Breast epithelium (tissue), 4 donors: ENCODE measurements at regions of chr22 and their contacts with region 1.

Region 1: DNA sequence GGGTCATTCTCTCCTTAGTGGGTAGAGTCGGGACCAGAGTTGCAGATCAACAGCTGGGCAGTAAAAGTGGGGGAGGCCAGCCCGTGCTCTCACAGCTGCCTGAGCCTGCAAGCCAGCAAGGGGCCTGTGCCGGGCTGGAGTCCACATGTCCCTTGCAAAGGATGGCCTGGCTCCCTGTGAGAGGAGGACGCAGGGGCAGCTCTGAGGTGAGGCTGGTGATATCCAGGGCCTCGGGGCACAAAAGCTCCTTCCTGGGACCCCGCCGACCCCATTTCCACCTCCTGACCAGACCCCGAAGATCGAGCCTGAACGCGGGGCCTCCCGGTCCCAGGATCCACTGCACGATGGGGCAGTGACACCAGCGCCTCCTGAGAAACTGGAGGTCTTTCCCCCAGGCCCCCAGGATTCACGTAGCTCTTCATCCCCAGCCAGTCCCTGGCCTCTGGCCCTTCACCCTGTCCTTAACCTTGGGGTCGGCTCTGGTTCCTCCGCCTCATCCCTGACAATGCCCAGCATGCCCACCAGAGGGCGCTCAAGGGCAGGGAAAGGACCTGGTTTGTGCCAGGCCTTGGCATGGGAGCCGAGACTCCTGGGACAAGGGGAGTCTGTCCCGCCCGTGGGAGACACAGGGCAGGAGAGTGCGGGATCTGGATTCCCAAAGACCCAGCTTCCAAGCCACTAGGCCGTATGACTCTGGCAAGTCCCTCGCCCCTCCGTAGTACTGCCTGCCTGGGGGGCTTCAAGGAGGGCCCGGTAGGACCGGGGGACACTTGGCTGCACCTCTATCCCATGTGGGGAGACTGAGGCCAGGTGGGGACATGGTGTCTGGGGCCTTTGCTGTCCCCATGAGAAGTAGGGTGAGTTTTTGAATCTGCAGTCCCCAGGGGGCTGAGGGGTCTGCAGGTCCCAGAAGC is 17.8 kb upstream of the WNT7B start:
- DNase-seq: peak; percentile 72 to 89
- H3K4me3 ChIP-seq: peak overlapping the region in 1 of 3 donors; percentile 2
- H3K27ac ChIP-seq: peak overlapping the region in 1 of 2 donors; percentile 5
- H3K4me1 ChIP-seq: peaks cover 6 to 9% of the 10 kb centered on the region in 2 donors
- H3K27me3 ChIP-seq: no peaks in the 10 kb centered on the region
- CTCF ChIP-seq: peak; percentile 96 to 99 (median 96)
- POLR2A ChIP-seq: no peak

Region 2: DNA sequence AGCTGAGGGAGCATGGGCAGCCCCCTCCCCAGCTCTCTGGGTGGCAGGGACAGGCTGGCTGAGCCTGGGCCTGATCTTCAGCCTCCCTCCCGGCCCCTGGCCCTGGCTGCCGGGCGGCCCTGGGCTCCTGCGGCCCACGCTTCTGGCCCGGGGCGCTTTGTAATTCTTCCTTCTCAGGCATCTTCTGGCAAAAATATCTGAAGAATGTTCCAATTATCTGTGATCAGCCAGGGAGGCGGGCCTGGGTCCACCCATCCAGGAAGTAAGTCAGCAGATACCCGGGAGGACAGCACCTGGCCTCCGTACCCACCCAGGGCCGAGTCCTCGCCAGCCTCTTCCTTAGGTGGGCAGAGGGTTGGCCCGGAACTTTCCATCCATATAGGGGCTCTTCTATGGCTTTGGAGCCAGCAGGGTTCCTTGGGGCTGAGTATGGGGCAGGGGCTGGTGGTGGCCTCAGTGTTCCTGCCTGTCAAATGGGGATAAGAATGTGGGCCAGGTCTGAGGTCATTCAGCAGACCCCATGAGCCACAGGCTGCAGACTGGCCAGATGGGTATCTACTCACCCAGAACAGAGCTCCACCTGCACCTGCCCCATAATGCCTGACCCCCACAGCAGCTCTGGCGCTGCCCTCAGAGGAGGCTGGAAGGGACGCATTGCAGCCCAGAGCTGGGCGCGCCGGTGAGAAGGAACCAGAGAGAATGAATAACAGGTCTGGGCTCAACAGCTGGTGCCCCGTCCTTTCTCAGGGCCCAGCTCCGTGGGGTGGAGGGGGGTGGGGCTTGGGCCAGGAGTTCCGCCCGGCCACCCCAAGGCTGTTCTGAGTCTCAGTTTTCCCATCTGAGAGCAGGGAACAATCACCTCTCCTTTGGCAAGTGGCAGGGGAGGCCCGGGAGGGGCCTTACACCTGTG is 34.0 kb before region 1 on chr22:
- intact Hi-C with region 1: no loop called
- DNase-seq: no peak
- H3K4me3 ChIP-seq: no peak overlapping the region
- H3K27ac ChIP-seq: no peak overlapping the region
- H3K4me1 ChIP-seq: no peaks in the 10 kb centered on the region
- H3K27me3 ChIP-seq: peaks cover 0 to 10% of the 10 kb centered on the region in 2 donors
- CTCF ChIP-seq: no peak
- POLR2A ChIP-seq: no peak

Region 3: DNA sequence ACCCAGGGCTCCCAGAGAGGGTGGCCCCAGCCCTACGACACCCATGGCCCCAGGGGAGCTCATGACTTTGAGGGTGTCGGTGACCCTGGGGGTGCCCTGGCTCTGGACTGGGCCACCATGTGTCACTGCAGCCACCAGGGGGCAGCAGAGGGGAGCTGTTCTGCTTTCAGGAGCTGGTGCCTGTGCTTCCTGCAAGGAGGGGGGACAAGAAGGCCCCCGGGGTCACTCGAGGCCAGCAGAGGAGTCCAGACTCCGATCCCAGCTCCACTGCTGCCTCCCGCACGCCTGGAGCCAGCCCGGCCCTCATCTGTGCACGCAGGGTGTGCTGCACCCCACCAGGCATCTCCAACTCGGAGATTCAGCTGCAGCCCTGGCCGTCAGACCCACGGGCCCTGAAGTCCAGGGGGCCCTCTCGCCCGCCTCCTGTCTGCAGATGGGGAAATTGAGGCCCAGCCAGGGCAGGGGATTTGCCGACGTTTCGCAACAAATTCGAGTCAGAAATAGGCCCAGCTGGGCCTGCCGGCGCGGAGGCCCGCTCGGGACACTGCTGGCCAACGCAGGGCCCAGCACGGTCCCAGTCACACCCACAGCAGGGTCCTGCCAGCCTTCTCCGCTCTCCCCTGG is 11.7 kb after region 1 on chr22:
- intact Hi-C with region 1: no loop called
- DNase-seq: peak; percentile 89 to 93
- H3K4me3 ChIP-seq: peak overlapping the region; percentile 15 to 51 (median 15)
- H3K27ac ChIP-seq: peak overlapping the region; percentile 98 to 100
- H3K4me1 ChIP-seq: peaks cover 17 to 18% of the 10 kb centered on the region in 2 donors
- H3K27me3 ChIP-seq: no peaks in the 10 kb centered on the region
- CTCF ChIP-seq: peak; percentile 98 to 99 (median 98)
- POLR2A ChIP-seq: no peak

Region 4: DNA sequence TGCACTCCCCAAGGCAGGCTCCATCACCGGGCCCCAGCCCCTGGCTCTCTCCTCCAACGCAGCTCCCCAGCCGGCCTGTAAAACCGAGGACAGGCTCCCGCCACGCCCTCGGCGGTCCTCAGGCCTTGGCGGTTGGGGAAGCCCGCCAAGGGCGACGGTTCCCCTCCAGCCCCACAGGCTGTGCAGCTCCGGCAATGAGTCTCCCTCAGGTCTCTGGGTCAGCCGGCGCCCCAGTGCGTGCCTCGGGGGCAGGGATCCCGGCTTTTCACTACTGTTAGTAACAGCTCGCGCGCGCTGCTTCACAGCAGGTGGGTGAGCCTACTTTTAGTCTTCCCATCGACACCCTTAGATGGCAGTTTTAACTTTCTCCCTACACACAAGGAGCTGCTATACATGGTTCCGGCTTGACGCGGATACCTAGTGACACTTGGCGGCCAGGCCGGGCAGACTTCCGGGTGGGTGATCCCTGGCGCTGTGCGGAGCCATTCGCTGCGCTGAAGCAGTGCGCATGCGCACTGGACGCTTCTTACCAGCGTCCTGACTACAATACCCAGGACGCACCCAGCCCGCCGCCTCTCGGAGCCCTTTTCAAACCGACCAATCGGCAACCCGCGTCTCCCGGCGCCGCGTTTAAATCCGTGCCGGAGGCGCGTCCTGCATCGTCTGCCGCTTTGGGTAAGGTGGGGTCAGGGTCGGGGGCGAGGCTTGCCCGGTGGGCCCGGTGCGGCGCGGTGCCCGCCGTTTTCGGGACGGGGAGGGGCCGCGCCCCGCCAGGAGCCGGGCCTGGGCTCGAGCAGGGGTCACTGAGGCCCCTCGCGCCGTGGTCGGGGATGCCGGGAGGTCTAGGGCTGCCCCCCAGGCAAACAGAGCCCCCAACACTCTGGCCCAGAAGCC is 301.8 kb after region 1 on chr22 and contains the start of gene GTSE1:
- intact Hi-C with region 1: loop called (anchors 10 kb)
- DNase-seq: peak; percentile 96 to 97
- H3K4me3 ChIP-seq: peak within 1 kb of the TSS; percentile 50 to 76 (median 67)
- H3K27ac ChIP-seq: peak within 1 kb of the TSS; percentile 95
- H3K4me1 ChIP-seq: peaks cover 0 to 3% of the 10 kb centered on the region in 2 donors
- H3K27me3 ChIP-seq: no peaks in the 10 kb centered on the region
- CTCF ChIP-seq: no peak
- POLR2A ChIP-seq: peak; percentile 34
- total RNA-seq, gene GTSE1: 0.29 to 0.48 TPM in 2 of 3 donors, not detected in the other

Region 5: DNA sequence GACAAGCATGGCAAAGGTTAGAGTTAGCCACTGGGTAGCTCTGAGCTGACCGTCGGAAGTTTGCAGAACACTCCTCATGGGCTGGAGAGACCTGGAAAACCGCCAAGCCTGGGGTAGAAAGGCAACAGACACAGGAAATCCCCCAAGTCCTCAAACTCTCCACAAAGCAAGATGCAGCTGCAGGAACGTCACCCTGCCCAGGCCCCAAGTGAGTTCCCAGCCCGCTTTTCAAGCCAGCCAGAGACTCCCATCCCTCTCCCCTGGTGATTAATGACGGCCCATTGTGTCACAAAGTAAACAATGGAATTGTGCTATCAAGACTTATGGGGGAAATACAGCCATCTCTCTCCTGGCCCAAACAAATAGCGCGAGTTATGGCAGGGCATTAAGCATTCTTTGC is 1400.7 kb after region 1 on chr22:
- intact Hi-C with region 1: loop called (anchors 10 kb)
- DNase-seq: peak in 1 of 2 donors; percentile 24
- H3K4me3 ChIP-seq: no peak overlapping the region
- H3K27ac ChIP-seq: no peak overlapping the region
- H3K4me1 ChIP-seq: no peaks in the 10 kb centered on the region
- H3K27me3 ChIP-seq: peaks cover 0 to 8% of the 10 kb centered on the region in 2 donors
- CTCF ChIP-seq: no peak
- POLR2A ChIP-seq: no peak